Heart right ventricle (tissue), 16 donors: ENCODE measurements at regions of chr10 and their contacts with region 1.

Region 1: DNA sequence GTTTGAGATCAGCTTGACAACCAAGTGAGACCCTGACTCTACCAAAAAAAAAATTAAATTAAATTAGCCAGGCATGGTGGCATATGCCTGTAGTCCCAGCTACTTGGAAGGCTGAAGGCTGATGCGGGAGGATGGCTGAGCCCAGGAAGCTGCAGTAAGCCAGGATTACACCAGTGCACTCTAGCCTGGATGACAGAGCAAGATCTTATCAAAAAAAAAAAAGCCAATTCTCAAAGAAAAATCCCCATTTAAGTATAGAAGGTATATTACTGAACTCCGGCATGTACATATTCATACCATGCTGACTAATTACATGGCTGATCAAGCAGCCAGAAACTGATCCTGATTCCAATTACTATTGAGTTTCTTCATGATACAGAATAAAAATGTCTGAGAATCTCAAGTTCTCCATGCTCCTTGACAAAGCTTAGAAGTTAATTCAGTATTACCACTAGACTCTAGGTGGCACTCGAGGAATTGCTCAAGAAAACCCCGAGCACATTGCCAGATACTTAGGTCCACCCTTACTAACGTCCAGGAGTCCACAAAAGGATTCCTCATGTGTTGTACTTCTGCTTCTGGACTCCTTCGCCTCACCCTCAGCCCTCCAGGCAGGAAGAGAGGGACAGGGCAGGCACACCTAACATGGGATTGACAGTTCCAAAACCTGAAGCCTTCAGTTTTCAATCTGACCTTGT is 148.9 kb downstream of the PARD3 start:
- DNase-seq: peak in 1 of 2 donors; percentile 55
- ATAC-seq: peak in 7 of 8 donors; percentile 62 to 87 (median 80)
- H3K4me3 ChIP-seq: no peak overlapping the region
- H3K27ac ChIP-seq: no peak overlapping the region
- H3K4me1 ChIP-seq: peaks cover 0 to 27% (median 12%) of the 10 kb centered on the region in 9 donors
- H3K27me3 ChIP-seq: no peaks in the 10 kb centered on the region
- CTCF ChIP-seq: peak; percentile 25 to 71 (median 55)

Region 2: GRCh38 chr10:34723750-34724149 is 57.6 kb after region 1 on chr10:
- intact Hi-C with region 1: loop called in 1 of 10 experiments (anchors 10 kb)
- DNase-seq: peak in 1 of 2 donors; percentile 67
- ATAC-seq: peak in 7 of 8 donors; percentile 70 to 87 (median 78)
- H3K4me3 ChIP-seq: peak overlapping the region in 1 of 10 donors; percentile 8
- H3K27ac ChIP-seq: peak overlapping the region in 1 of 10 donors; percentile 25
- H3K4me1 ChIP-seq: peaks cover 0 to 66% (median 37%) of the 10 kb centered on the region in 9 donors
- H3K27me3 ChIP-seq: no peaks in the 10 kb centered on the region
- CTCF ChIP-seq: peak; percentile 29 to 75 (median 56)

Region 3: DNA sequence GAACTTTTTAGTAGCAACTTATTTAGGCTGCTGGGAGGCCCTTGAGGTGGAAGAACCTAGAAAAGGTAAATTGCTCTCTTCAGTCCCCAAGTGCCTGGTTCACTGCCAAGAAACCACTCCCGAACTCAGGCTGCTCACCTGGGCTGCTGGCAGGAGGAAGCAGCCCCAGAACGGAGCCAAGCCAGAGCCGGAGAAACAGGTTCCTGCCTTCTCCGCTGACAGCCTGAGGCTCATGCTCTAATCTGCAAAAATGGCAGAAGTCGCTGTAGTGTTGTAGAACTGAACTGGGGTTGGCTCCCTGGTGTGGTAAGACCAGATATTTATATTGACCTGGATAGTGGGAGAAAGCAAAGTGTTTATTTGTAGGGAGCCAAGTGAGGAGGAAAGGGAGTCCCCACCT is 288.0 kb after region 1 on chr10:
- intact Hi-C with region 1: loop called in 3 of 10 experiments (anchors 10 kb)
- DNase-seq: no peak
- ATAC-seq: no peak
- H3K4me3 ChIP-seq: no peak overlapping the region
- H3K27ac ChIP-seq: no peak overlapping the region
- H3K4me1 ChIP-seq: peaks cover 0 to 10% (median 0%) of the 10 kb centered on the region in 9 donors
- H3K27me3 ChIP-seq: no peaks in the 10 kb centered on the region
- CTCF ChIP-seq: no peak

Region 4: DNA sequence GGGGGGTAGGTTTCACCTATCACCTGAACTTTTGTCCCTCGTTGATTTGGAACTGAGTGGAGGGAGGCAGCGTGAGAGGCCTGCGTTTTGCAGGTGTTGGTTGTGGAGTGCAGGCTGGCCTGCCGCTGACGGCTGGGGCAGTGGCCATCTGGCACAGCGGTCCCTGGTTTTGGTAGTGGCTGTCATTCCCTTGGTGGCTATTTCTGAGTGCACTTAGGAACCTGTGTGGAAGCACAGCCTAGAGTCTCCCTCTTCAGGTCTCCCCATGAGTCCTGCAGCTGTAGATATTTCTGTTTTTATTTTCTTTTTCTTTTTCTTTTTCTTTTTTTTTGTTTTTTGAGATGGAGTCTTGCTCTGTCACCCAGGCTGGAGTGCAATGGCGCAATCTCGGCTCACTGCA is 294.8 kb after region 1 on chr10:
- intact Hi-C with region 1: loop called in 7 of 10 experiments (anchors 5 to 10 kb)
- DNase-seq: peak; percentile 22 to 48
- ATAC-seq: peak; percentile 78 to 95 (median 90)
- H3K4me3 ChIP-seq: no peak overlapping the region
- H3K27ac ChIP-seq: no peak overlapping the region
- H3K4me1 ChIP-seq: no peaks in the 10 kb centered on the region
- H3K27me3 ChIP-seq: no peaks in the 10 kb centered on the region
- CTCF ChIP-seq: peak in 8 of 9 donors; percentile 12 to 59 (median 45)

Region 5: DNA sequence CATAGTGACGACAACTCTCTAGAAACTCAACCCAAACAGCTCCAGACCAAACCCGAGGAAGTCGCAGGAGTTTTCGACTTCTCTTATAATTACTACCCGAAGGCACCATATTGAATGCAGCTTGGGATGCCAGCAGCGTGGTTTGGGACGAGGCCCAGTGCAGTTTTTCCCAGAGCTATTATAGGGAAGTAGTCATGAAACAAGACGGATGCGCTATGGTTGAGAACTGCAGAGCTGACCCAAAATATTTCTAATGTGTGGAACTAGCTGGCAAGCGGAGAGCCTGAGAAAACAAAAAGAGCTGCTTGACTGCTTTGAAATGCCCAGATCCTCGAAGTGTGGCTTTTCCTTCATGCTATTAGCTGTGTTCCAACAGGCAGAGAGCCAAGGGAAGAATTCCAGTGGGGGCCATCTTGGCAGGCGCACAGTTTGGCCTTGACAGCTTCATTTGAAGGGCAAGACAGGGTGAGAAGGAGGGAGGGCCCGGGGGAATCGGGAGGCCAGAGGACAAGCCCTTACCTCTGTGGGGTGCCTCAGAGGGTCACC is 301.3 kb after region 1 on chr10:
- intact Hi-C with region 1: loop called in 4 of 10 experiments (anchors 5 to 10 kb)
- DNase-seq: peak; percentile 33 to 70
- ATAC-seq: peak; percentile 12 to 74 (median 50)
- H3K4me3 ChIP-seq: no peak overlapping the region
- H3K27ac ChIP-seq: peak overlapping the region in 3 of 10 donors; percentile 14 to 30 (median 19)
- H3K4me1 ChIP-seq: peaks cover 0 to 24% (median 7%) of the 10 kb centered on the region in 9 donors
- H3K27me3 ChIP-seq: no peaks in the 10 kb centered on the region
- CTCF ChIP-seq: no peak

Region 6: GRCh38 chr10:35027567-35027966 is 361.4 kb after region 1 on chr10:
- intact Hi-C with region 1: loop called in 5 of 10 experiments (anchors 2 to 10 kb)
- DNase-seq: no peak
- ATAC-seq: no peak
- H3K4me3 ChIP-seq: no peak overlapping the region
- H3K27ac ChIP-seq: no peak overlapping the region
- H3K4me1 ChIP-seq: no peaks in the 10 kb centered on the region
- H3K27me3 ChIP-seq: no peaks in the 10 kb centered on the region
- CTCF ChIP-seq: peak in 7 of 9 donors; percentile 31 to 60 (median 47)